SK-N-SH (cell line): ENCODE measurements at regions of chr12 and their contacts with region 1.

Region 1: DNA sequence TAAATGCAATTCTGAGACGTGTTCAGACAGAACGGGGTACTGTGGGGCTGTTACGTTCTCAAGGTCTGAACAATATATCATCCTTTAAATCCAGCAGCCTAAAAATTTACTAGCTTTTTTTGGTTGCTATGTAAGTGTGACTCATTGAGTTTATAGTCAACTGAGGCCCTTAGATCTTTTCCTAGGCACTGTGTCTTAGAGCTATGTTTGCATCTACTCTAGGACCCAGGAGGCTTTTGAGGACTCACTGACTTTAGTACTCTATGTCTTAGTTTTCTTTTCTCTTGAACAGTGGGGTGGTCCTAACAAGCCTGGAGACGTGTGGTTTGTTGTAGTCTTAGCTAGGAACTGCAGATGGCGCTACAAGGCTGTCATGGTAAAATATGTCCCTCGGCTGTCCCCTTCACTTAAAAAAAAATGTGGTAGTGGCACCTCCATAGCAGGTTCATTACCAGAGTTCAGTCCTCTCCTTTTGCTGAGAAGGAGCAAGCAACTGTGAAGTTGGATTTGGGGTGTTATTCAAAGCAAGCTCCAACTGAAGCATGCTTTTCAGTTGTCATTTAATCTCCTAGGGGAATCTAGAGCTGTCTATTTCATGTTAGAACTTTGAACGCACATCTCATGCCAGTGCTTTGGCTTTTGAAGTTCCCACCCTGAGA is 8.7 kb upstream of the SPATS2 start:
- DNase-seq: peak; percentile 74
- H3K4me3 ChIP-seq: peak overlapping the region in 1 of 2 experiments; percentile 43; a peak in 1 of 4 replicates
- H3K27ac ChIP-seq: peak overlapping the region in 1 of 2 experiments; percentile 44; a peak in 2 of 4 replicates
- H3K4me1 ChIP-seq: no peaks in the 10 kb centered on the region
- H3K27me3 ChIP-seq: no peaks in the 10 kb centered on the region
- CTCF ChIP-seq: peak; percentile 92
- EP300 ChIP-seq: no peak
- RAD21 ChIP-seq: peak; percentile 97

Region 2: GRCh38 chr12:49288412-49288853 is 70.2 kb before region 1 on chr12:
- CTCF ChIA-PET with region 1: interaction called, 256 read pairs
- POLR2A ChIA-PET with region 1: interaction called, 3 read pairs
- DNase-seq: peak; percentile 76
- H3K4me3 ChIP-seq: no peak overlapping the region; a peak in 1 of 4 replicates
- H3K27ac ChIP-seq: no peak overlapping the region
- H3K4me1 ChIP-seq: peaks cover 6 to 18% of the 10 kb centered on the region in 2 experiments; a peak in 3 of 4 replicates
- H3K27me3 ChIP-seq: no peaks in the 10 kb centered on the region
- CTCF ChIP-seq: peak; percentile 92
- EP300 ChIP-seq: no peak
- RAD21 ChIP-seq: peak; percentile 87

Region 3: GRCh38 chr12:49336645-49337584 is 21.7 kb before region 1 on chr12 and contains the start of gene C1QL4:
- CTCF ChIA-PET with region 1: interaction called, 56 read pairs
- POLR2A ChIA-PET with region 1: interaction called, 3 read pairs
- DNase-seq: peak; percentile 99
- H3K4me3 ChIP-seq: peak within 1 kb of the TSS; percentile 69 to 97
- H3K27ac ChIP-seq: no peak within 1 kb of the TSS
- H3K4me1 ChIP-seq: peaks cover 0 to 9% of the 10 kb centered on the region in 2 experiments; a peak in 1 of 4 replicates
- H3K27me3 ChIP-seq: no peaks in the 10 kb centered on the region
- CTCF ChIP-seq: peak; percentile 84
- EP300 ChIP-seq: no peak
- RAD21 ChIP-seq: peak; percentile 52
- polyA plus RNA-seq, gene C1QL4: 9.8 and 14.6 TPM in 2 replicates

Region 4: GRCh38 chr12:49375406-49375805 is 16.8 kb after region 1 on chr12:
- CTCF ChIA-PET with region 1: interaction called, 57 read pairs
- POLR2A ChIA-PET with region 1: no interaction called
- DNase-seq: no peak
- H3K4me3 ChIP-seq: no peak overlapping the region; a peak in 1 of 4 replicates
- H3K27ac ChIP-seq: no peak overlapping the region
- H3K4me1 ChIP-seq: no peaks in the 10 kb centered on the region
- H3K27me3 ChIP-seq: no peaks in the 10 kb centered on the region
- CTCF ChIP-seq: no peak
- EP300 ChIP-seq: no peak
- RAD21 ChIP-seq: no peak

Region 5: DNA sequence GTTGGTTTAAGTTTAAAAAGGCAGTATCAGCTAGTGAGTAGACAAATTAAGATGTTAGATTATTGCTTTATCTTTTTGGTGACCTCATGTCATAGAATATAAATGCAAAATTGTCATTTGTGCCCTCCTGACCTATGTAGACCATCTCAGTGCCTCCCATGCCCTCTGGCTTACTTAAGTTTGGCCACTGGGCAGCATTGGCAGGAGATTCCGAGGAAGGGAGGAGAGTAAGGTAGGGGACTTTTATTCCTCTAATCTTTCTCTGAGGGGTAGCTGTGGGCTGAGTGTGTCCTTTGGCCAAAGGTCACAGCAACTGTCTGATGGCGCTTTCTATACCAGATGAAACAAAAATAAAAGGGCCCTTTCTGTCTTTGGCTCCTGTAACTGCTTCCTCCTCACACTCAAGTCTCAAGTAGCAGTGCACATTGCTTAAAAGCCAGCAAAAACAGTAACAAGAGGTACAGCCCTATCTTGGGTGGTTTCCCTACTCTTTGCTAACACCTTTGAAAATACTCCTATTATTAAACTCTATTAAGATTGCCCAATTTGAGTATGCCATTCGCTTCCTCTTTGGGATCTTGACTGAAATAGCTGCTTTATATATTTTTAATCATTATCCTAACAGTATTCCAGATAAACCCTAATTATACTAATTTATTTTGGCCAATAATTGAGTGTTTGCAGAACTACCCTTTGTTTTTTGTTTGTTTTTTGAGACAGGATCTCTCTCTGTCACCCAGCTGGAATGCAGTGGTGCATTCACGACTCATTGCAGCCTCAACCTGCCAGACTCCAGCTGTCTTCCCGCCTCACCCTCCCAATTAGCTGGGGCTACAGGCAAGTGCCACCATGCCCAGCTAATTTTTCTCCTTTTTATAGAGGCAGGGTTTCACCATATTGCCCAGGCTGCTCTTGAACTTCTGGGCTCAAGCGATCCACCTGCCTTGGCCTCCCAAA is 123.8 kb after region 1 on chr12:
- CTCF ChIA-PET with region 1: interaction called, 10 read pairs
- POLR2A ChIA-PET with region 1: no interaction called
- DNase-seq: no peak
- H3K4me3 ChIP-seq: no peak overlapping the region
- H3K27ac ChIP-seq: peak overlapping the region in 1 of 2 experiments; percentile 46; a peak in 2 of 4 replicates
- H3K4me1 ChIP-seq: peaks cover 3 to 29% of the 10 kb centered on the region in 2 experiments; a peak in 3 of 4 replicates
- H3K27me3 ChIP-seq: no peaks in the 10 kb centered on the region
- CTCF ChIP-seq: no peak
- EP300 ChIP-seq: no peak
- RAD21 ChIP-seq: no peak

Region 6: DNA sequence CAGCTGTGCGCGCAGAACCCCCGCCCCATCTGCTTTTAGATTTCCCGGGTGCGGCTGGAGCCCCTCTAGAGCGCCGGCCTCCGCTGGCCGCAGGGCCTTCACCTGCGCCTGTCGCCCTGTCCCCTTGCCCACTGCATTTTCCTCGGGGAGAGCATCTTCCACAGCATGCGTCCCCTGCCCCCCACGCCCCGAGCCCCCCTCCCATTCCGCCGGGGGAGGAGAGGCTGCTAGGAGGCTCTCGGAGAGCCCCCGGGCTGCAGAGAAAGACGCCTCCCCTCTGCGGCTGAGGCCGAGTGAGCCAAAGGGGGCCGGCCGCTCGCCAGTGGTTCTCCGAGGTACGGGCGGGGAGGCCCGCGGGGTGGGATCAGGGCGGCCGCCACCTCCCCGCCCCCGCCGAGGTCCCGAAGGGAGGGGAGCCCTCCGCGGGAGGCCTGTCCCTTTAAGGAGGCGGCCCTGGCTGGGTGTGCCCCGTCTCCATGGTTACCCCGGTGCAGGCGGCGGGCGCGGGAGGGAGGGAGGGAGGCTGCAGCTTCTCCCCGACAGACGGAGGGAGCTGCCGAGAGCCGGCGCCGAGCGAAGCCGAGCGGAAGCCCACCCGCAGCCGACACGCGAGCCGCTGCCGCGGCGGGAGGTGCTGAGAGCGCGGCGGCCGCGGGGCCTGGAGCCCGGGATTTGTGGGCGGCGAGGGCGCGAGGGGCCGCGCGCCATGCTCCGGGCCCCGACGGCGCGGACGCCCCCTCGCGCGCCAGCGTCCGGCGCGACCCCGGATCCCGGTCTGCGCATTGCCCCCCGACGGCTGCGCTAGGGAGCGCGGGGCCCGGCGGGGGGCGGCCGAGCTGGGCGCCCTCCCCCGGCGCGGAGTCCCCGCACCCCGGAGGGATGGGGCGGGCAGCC is 180.1 kb after region 1 on chr12 and contains the start of gene KCNH3:
- CTCF ChIA-PET with region 1: interaction called, 15 read pairs
- POLR2A ChIA-PET with region 1: no interaction called
- DNase-seq: peak; percentile 93
- H3K4me3 ChIP-seq: peak within 1 kb of the TSS; percentile 53 to 55
- H3K27ac ChIP-seq: no peak within 1 kb of the TSS
- H3K4me1 ChIP-seq: peaks cover 0 to 11% of the 10 kb centered on the region in 2 experiments; a peak in 1 of 4 replicates
- H3K27me3 ChIP-seq: no peaks in the 10 kb centered on the region
- CTCF ChIP-seq: no peak
- EP300 ChIP-seq: no peak
- RAD21 ChIP-seq: no peak
- polyA plus RNA-seq, gene KCNH3: 3.2 and 3.7 TPM in 2 replicates

Region 7: DNA sequence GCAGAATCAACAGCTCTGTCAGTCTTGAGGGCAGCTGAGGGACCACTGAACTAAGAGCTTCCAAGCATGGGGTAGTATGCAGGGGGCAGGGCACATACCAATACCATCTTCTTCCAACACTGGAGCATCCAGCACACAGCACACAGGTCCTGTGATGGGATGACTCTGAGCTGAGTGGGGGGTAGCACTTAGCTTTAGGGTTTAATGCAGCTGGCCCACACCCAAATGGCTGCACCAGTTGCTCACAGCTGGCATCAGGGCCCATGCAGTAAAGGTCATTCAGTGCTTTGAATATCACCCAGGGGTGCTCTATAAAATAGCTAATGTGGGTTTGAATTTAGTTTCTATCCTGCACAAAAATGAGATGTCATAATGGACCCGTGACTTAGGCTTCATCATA is 245.1 kb after region 1 on chr12:
- CTCF ChIA-PET with region 1: interaction called, 10 read pairs
- POLR2A ChIA-PET with region 1: no interaction called
- DNase-seq: no peak
- H3K4me3 ChIP-seq: no peak overlapping the region
- H3K27ac ChIP-seq: no peak overlapping the region
- H3K4me1 ChIP-seq: peaks cover 0 to 2% of the 10 kb centered on the region in 2 experiments; a peak in 1 of 4 replicates
- H3K27me3 ChIP-seq: no peaks in the 10 kb centered on the region
- CTCF ChIP-seq: no peak
- EP300 ChIP-seq: no peak
- RAD21 ChIP-seq: no peak

Region 8: GRCh38 chr12:49707128-49707811 is 348.7 kb after region 1 on chr12 and contains the start of gene FMNL3:
- CTCF ChIA-PET with region 1: no interaction called
- POLR2A ChIA-PET with region 1: no interaction called
- DNase-seq: peak; percentile 99
- H3K4me3 ChIP-seq: peak within 1 kb of the TSS; percentile 83 to 96
- H3K27ac ChIP-seq: peak within 1 kb of the TSS; percentile 79 to 88
- H3K4me1 ChIP-seq: peaks cover 25 to 28% of the 10 kb centered on the region in 2 experiments; a peak in 3 of 4 replicates
- H3K27me3 ChIP-seq: no peaks in the 10 kb centered on the region
- CTCF ChIP-seq: peak; percentile 93
- EP300 ChIP-seq: 0 out of 4 replicates have a peak, but pooled peaks of 1 of the 2 experiments have one; percentile 25
- RAD21 ChIP-seq: peak; percentile 95
- polyA plus RNA-seq, gene FMNL3: 10.2 and 13.1 TPM in 2 replicates